ENCODE measurements at regions of chr20 and their contacts with region 1.

Region 1: DNA sequence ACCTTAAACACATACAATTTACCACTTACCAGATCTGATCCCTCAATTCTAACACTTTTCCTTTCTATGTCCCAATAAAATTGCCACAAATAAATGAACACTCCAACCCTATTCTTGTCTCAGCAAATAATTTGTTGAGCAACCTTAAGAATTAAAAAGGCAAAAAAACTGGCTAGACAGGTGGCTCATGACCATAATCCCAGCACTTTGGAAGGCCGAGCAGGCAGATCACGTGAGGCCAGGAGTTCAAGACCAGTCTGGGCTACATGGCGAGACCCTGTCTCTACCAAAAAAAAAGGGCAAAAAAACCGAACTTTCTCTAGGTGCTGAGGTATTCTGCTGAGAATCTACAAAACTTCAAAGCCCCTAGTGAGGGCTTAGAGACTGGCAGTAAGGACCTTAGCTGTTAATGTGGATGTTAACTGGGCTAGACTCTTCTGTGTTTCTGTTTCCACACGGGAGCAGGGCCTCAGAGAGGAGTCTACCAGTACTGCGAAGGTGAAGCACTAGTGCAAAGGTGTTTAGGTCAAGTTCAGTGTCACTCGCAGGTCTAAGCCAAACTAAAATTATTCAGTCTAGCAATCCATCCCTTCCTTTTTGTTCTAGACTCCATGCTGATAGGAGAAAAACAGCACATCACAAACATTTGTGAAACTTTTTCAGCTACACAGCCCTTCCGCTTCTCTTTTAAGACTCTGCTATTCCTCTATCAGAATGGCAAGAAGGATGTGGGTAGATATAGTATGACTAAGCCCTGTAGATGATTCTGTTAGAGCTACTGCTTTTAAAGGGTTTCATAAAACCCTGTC is 2.6 kb downstream of the FASTKD5 start:
- DNase-seq: no peak

Region 2: DNA sequence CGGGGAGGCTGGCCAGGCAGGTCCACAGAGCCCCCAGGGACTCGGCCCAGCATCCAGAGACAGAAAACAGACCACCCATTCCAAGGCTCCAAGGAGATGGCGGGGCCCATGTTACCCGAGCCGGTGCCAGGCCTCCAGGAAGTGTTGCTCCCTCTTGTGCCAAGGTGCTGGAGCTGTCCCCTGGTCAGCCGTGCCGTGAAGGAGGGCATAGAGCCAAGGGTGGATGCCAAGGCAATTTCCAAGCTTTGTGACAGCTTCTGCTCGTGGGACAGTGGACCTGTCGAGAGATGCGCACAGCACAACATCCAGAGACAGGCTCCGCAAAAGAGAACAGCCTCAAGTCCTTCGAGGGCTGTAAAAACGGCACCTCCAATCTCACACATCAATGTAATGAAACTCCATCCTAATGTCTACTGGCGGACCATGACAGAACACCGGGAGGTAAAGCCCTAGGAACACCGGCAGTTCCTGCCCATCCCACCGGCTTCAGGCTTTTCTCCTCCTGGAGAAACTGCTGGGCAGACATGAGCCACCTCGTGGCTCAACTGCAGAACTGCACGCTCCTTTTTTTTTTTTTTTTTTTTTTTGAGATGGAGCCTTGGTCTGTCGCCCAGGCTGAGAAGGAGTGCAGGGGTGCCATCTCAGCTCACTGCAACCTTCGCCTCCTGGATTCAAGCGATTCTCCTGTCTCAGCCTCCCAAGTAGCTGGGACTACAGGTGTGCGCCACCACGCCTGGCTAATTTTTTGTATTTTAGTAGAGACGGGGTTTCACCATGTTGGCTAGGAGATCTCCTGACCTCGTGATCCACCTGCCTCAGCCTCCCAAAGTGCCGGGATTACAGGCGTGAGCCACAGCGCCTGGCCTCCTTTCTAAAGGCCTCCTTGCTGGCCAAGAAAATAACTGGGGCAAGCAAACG is 41.6 kb before region 1 on chr20:
- intact Hi-C with region 1: loop called (anchors 2 kb)
- DNase-seq: peak in 2 of 10 donors; percentile 78 to 89

Region 3: DNA sequence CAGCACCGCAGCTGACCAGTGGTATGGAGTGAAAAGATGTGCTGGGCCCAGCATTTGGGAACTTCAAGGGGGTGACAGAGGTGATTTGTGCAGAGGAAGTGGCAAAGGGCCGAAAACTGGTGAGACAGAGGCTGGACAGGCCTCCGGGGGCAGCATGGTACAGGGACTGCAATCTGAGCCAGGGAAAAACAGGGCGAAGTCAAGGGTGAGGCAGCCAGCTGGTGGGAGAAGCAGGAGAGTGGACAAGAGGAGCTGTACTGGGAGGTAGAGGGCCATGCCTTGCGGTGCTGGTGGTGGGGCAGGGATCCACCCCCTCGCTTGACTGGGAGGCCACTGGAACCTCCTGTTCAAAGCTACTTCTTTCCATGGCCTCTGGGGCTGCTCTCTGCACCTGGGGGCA is 513.5 kb after region 1 on chr20:
- intact Hi-C with region 1: no loop called
- DNase-seq: no peak

Region 4: GRCh38 chr20:3995067-3995748 is 838.2 kb after region 1 on chr20:
- intact Hi-C with region 1: no loop called
- DNase-seq: no peak

Measured in posterior cingulate gyrus (tissue), 11 donors.